H1 (cell line): ENCODE measurements at regions of chr1 and their contacts with region 1.

Region 1: DNA sequence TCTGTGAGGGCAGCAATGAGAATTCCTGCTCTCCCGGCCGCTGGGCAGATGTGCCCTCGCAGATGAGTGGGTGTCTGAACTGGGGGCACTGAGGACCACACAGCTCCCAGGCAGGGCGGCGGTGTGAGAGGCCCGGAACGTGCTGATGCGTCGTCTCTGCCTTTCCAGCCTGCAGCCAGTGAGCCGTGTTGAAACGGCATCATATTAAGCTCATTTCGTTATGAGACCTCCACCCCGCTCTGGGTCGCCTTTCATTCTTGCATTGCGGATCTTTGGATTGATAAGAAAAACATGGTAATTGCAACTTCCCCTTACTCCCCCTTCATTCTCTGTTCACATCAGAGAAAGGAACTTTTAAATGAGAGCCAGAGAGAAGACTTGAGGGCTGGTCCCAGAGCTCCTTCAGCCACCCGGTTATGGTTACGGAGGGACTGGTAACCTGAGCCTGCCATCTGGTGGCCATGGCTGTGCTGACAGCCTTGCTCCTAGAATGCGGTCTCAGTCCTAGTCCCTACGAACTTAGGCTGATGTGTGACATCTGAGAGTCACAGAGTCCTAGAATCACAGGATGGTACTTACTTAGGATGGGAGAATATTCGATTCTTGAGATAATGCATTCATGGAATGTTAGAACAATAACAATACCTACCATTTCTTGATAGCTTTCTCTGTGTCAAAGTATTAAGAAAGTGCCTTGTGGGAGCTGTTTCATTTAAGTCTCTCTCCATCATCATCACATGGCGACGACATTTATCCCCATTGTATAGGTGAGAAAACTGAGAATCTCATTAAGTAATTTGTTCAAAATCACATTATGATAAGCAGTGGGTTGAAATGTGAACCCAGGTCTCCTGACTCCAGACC is 271.0 kb downstream of the TRABD2B start:
- DNase-seq: peak in 1 of 2 experiments; percentile 84
- H3K4me3 ChIP-seq: peak overlapping the region in 1 of 4 experiments; percentile 55; a peak in 2 of 8 replicates
- H3K27ac ChIP-seq: no peak overlapping the region
- H3K4me1 ChIP-seq: peaks cover 0 to 14% (median 9%) of the 10 kb centered on the region in 4 experiments; a peak in 6 of 7 replicates
- H3K27me3 ChIP-seq: peaks cover 14 to 37% (median 31%) of the 10 kb centered on the region in 4 experiments
- CTCF ChIP-seq: peak; percentile 89 to 98 (median 97)
- EP300 ChIP-seq: no peak
- POLR2A ChIP-seq: no peak
- RAD21 ChIP-seq: peak; percentile 88

Region 2: DNA sequence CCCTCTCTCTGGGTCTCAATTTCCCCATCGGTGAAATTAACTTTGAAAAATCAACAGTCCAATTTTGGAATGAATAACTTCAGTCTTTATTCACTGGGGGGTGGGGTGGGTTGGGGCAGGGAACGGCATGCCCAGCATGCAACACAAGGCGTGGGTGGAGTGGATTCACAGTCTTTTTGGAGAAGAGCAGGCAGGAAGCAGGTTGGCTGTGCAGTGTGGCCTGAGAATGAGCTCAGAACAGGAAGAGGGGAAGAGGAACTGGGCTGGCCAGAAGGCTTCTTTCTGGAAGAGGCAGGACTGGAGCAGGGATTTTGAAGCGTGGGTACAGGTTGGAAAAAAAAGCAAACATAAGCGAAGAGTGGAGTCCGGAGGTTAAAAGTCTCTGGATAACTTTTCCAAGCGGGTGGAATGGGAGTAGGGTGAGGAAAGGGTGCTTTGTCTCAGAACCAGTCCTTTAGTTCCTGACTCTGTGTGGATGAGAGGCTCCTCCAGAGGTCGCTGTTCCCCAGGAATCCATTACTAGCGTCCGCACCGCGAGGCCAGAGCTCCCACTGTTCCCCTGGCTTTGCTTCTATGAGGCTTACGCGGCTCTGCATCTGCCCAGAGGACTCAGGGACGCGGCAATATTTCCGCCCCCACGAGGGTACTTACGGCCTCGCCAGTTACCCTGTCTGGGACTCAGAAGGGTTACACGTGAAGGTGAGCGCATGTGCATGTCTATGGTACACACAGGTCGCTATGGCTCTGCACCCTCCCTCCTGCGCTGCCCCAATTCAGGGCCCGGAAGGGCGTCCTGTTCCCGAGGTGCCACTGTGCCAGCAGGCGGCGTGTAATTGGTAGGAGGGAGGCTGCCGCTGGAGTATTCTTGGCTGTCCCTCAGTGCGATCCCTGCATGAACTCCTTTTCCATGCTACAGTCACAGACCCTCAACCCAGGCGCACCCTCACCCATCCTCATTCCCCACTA is 293.9 kb before region 1 on chr1:
- CTCF ChIA-PET with region 1: interaction called, 17 read pairs
- POLR2A ChIA-PET with region 1: interaction called, 4 read pairs
- DNase-seq: peak; percentile 58 to 94
- H3K4me3 ChIP-seq: peak overlapping the region; percentile 28 to 54 (median 42); a peak in 7 of 8 replicates
- H3K27ac ChIP-seq: no peak overlapping the region
- H3K4me1 ChIP-seq: peaks cover 3 to 36% (median 15%) of the 10 kb centered on the region in 4 experiments; a peak in 6 of 7 replicates
- H3K27me3 ChIP-seq: peaks cover 65 to 99% (median 90%) of the 10 kb centered on the region in 4 experiments
- CTCF ChIP-seq: peak in 2 of 3 experiments; percentile 83 to 87; a peak in 3 of 4 replicates
- EP300 ChIP-seq: no peak
- POLR2A ChIP-seq: no peak
- RAD21 ChIP-seq: peak; percentile 79 to 83

Region 3: DNA sequence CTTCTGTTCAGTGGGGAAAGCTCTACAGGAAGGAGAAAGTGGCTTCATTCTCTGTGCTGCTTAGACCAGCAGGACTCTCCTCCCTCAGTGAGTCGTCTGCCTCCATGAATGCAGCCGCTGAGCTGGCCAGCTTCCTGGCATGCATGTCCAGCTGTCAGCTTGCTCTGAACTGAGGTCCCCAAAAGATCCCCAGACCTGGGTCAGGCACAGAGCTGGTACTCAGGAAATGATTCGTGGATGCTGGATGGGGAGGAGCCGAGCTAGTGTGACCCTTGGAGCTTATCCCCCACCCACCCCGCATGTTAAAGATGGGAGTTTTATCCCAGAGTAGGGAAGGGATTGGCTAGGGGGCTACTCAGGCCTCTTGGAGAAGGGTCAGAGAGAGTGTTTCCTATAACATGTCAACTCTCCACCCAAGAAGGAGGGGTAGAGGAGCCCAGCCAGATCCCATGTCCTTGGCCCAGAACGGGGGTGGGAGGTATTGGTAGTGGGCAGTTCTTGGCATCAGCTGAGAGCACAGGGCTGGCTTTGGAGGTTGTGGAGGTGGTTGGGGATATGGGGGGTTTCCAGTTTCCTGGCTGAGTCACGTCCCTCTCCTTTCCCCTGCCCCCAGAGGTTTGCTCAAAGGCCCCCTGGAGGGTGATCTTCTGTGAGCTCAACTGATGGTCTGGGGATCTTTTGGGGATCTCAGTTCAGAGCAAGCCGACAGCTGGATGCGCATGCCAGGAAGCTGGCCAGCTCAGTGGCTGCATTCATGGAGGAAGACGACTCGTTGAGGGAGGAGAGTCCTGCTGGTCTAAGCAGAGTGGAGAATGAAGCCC is 178.3 kb before region 1 on chr1:
- CTCF ChIA-PET with region 1: interaction called, 13 read pairs
- POLR2A ChIA-PET with region 1: no interaction called
- DNase-seq: no peak
- H3K4me3 ChIP-seq: no peak overlapping the region
- H3K27ac ChIP-seq: no peak overlapping the region
- H3K4me1 ChIP-seq: peaks cover 0 to 11% (median 5%) of the 10 kb centered on the region in 4 experiments; a peak in 6 of 7 replicates
- H3K27me3 ChIP-seq: peaks cover 0 to 2% (median 0%) of the 10 kb centered on the region in 4 experiments; a peak in 3 of 7 replicates
- CTCF ChIP-seq: no peak
- EP300 ChIP-seq: no peak
- POLR2A ChIP-seq: no peak
- RAD21 ChIP-seq: no peak

Region 4: GRCh38 chr1:47738560-47739182 is 12.4 kb after region 1 on chr1:
- CTCF ChIA-PET with region 1: interaction called, 24 read pairs
- POLR2A ChIA-PET with region 1: no interaction called
- DNase-seq: peak in 1 of 2 experiments; percentile 86
- H3K4me3 ChIP-seq: no peak overlapping the region
- H3K27ac ChIP-seq: no peak overlapping the region
- H3K4me1 ChIP-seq: no peaks in the 10 kb centered on the region
- H3K27me3 ChIP-seq: peaks cover 0 to 3% (median 1%) of the 10 kb centered on the region in 4 experiments; a peak in 2 of 7 replicates
- CTCF ChIP-seq: peak; percentile 77 to 88 (median 85)
- EP300 ChIP-seq: no peak
- POLR2A ChIP-seq: no peak
- RAD21 ChIP-seq: peak; percentile 85 to 89

Region 5: DNA sequence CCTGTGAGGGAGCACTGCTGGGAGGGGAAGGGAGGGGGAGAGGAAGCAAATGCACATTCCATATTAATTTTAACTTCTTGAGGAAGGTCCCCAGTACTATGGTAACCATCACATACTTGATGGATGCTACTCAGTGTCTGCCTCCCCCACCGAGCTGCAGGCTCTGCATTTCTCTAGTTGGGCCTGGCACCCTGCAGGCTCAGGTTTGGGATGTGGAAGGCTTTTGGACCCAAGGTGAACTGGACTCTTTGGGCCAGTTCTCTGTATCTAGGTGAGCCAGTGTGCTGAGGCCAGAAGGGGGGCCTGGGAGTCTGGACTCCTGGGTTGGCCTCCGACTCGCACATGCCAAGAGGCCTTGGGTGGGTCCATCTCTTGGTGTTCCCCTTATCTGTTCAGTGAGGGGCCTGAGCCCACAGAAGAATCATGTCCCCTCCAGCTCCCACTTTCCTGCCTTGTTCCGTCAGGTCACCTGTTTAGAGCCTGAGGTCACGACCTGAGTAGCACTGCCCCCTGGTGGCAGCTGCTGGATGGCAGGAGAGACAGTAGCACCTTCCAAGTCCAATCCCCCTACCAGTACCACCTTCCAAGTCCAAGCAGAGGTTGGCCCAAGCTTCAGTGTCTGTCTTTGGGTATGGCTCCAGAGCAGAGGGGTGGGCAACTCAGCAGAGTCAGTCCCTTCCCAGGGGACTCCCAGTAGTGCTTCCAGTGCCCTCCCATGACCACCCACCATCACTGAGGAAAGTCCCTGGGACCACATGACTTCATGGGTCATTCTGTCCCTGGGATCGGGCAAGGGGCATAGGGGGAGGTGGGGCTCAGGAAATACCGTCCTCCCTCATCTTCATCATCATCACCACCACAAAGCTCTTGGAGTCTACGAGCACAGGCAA is 29.1 kb after region 1 on chr1:
- CTCF ChIA-PET with region 1: interaction called, 16 read pairs
- POLR2A ChIA-PET with region 1: no interaction called
- DNase-seq: peak; percentile 41 to 93
- H3K4me3 ChIP-seq: no peak overlapping the region
- H3K27ac ChIP-seq: no peak overlapping the region
- H3K4me1 ChIP-seq: no peaks in the 10 kb centered on the region; a peak in 1 of 7 replicates
- H3K27me3 ChIP-seq: peaks cover 0 to 2% (median 0%) of the 10 kb centered on the region in 4 experiments; a peak in 1 of 7 replicates
- CTCF ChIP-seq: peak; percentile 75 to 97 (median 95)
- EP300 ChIP-seq: no peak
- POLR2A ChIP-seq: no peak
- RAD21 ChIP-seq: peak; percentile 51 to 64

Region 6: GRCh38 chr1:47796626-47797025 is 70.4 kb after region 1 on chr1:
- CTCF ChIA-PET with region 1: no interaction called
- POLR2A ChIA-PET with region 1: no interaction called
- DNase-seq: no peak
- H3K4me3 ChIP-seq: no peak overlapping the region
- H3K27ac ChIP-seq: no peak overlapping the region
- H3K4me1 ChIP-seq: no peaks in the 10 kb centered on the region; a peak in 1 of 7 replicates
- H3K27me3 ChIP-seq: no peaks in the 10 kb centered on the region
- CTCF ChIP-seq: no peak
- EP300 ChIP-seq: no peak
- POLR2A ChIP-seq: no peak
- RAD21 ChIP-seq: no peak